ENCODE measurements at regions of chrX and their contacts with region 1.

Region 1: DNA sequence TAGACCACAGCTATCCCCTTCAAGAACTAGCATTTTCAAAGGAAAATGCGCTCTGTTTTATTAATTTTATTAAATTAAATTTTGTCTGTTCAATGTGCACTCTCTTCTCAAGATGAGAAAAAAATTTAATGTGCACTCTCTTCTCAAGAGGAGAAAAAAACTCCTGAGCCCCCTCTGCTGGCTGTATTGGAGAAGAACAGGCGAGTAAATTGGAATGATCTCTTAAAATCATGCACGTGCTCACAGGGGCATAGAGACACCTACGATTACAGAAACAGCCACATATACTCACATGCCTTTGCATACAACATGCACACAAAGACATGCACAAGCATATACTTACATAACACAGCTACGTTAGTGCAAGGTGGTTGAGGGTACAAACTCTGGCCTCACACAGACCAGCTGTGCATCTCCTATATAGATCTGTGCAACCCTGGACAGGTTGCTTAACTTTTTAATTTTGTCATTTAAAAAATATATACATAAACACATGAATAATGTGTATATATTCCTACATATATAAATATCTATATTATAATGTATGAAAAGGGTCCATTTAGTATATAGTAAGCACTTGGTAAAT is 176.2 kb upstream of the CXorf66 start:
- DNase-seq: peak; percentile 31
- ATAC-seq: peak; percentile 87
- H3K4me3 ChIP-seq: no peak overlapping the region
- H3K27ac ChIP-seq: no peak overlapping the region
- H3K4me1 ChIP-seq: no peaks in the 10 kb centered on the region
- H3K27me3 ChIP-seq: no peaks in the 10 kb centered on the region
- CTCF ChIP-seq: peak; percentile 64
- POLR2A ChIP-seq: no peak
- RAD21 ChIP-seq: peak; percentile 41

Region 2: GRCh38 chrX:140071037-140071436 is 70.5 kb before region 1 on chrX:
- CTCF ChIA-PET with region 1: no interaction called
- POLR2A ChIA-PET with region 1: no interaction called
- dilution Hi-C with region 1: no loop called
- in situ Hi-C with region 1: loop called (anchors 5 kb)
- intact Hi-C with region 1: no loop called
- DNase-seq: no peak
- ATAC-seq: no peak
- H3K4me3 ChIP-seq: no peak overlapping the region
- H3K27ac ChIP-seq: no peak overlapping the region
- H3K4me1 ChIP-seq: no peaks in the 10 kb centered on the region
- H3K27me3 ChIP-seq: no peaks in the 10 kb centered on the region
- CTCF ChIP-seq: no peak
- POLR2A ChIP-seq: no peak
- RAD21 ChIP-seq: no peak